ENCODE measurements at regions of chr6 and their contacts with region 1.

Region 1: GRCh38 chr6:2876210-2877056 is 26.7 kb downstream of the SERPINB9 start:
- DNase-seq: peak; percentile 58
- ATAC-seq: peak; percentile 15
- H3K4me3 ChIP-seq: peak overlapping the region; percentile 44 to 64 (median 58)
- H3K4me3 Mint-ChIP-seq: peak overlapping the region; percentile 91
- H3K27ac ChIP-seq: peak overlapping the region; percentile 91 to 94
- H3K27ac Mint-ChIP-seq: peak overlapping the region; percentile 97
- H3K4me1 ChIP-seq: peaks cover 73 to 75% of the 10 kb centered on the region in 2 donors
- H3K4me1 Mint-ChIP-seq: peaks cover 85% of the 10 kb centered on the region
- H3K27me3 ChIP-seq: no peaks in the 10 kb centered on the region
- H3K27me3 Mint-ChIP-seq: no peaks in the 10 kb centered on the region
- CTCF ChIP-seq: no peak

Region 2: GRCh38 chr6:1604158-1605030 is 1272.0 kb before region 1 on chr6:
- CTCF ChIA-PET with region 1: no interaction called
- POLR2A ChIA-PET with region 1: no interaction called
- intact Hi-C with region 1: no loop called
- DNase-seq: peak; percentile 84
- ATAC-seq: peak; percentile 81
- H3K4me3 ChIP-seq: peak overlapping the region in 4 of 5 experiments; percentile 10 to 59 (median 42)
- H3K4me3 Mint-ChIP-seq: peak overlapping the region; percentile 34
- H3K27ac ChIP-seq: no peak overlapping the region
- H3K27ac Mint-ChIP-seq: no peak overlapping the region
- H3K4me1 ChIP-seq: peaks cover 50 to 52% of the 10 kb centered on the region in 2 donors
- H3K4me1 Mint-ChIP-seq: peaks cover 34% of the 10 kb centered on the region
- H3K27me3 ChIP-seq: peaks cover 0 to 83% (median 66%) of the 10 kb centered on the region in 4 experiments
- H3K27me3 Mint-ChIP-seq: peaks cover 73% of the 10 kb centered on the region
- CTCF ChIP-seq: peak; percentile 99

Region 3: GRCh38 chr6:2853761-2854395 is 22.6 kb before region 1 on chr6:
- CTCF ChIA-PET with region 1: interaction called, 6 read pairs
- POLR2A ChIA-PET with region 1: interaction called, 10 read pairs
- intact Hi-C with region 1: no loop called
- DNase-seq: peak; percentile 85
- ATAC-seq: peak; percentile 39
- H3K4me3 ChIP-seq: peak overlapping the region in 3 of 5 experiments; percentile 31 to 52 (median 31)
- H3K4me3 Mint-ChIP-seq: peak overlapping the region; percentile 74
- H3K27ac ChIP-seq: peak overlapping the region; percentile 73 to 84
- H3K27ac Mint-ChIP-seq: peak overlapping the region; percentile 98
- H3K4me1 ChIP-seq: peaks cover 54 to 62% of the 10 kb centered on the region in 2 donors
- H3K4me1 Mint-ChIP-seq: peaks cover 68% of the 10 kb centered on the region
- H3K27me3 ChIP-seq: no peaks in the 10 kb centered on the region
- H3K27me3 Mint-ChIP-seq: no peaks in the 10 kb centered on the region
- CTCF ChIP-seq: peak; percentile 69

Region 4: GRCh38 chr6:2862712-2863181 is 13.7 kb before region 1 on chr6:
- CTCF ChIA-PET with region 1: interaction called, 5 read pairs
- POLR2A ChIA-PET with region 1: interaction called, 13 read pairs
- intact Hi-C with region 1: loop called (anchors 1 kb)
- DNase-seq: peak; percentile 84
- ATAC-seq: peak; percentile 48
- H3K4me3 ChIP-seq: peak overlapping the region in 1 of 5 experiments; percentile 2
- H3K4me3 Mint-ChIP-seq: peak overlapping the region; percentile 72
- H3K27ac ChIP-seq: peak overlapping the region; percentile 91 to 97
- H3K27ac Mint-ChIP-seq: peak overlapping the region; percentile 95
- H3K4me1 ChIP-seq: peaks cover 71 to 75% of the 10 kb centered on the region in 2 donors
- H3K4me1 Mint-ChIP-seq: peaks cover 81% of the 10 kb centered on the region
- H3K27me3 ChIP-seq: no peaks in the 10 kb centered on the region
- H3K27me3 Mint-ChIP-seq: no peaks in the 10 kb centered on the region
- CTCF ChIP-seq: no peak

Region 5: DNA sequence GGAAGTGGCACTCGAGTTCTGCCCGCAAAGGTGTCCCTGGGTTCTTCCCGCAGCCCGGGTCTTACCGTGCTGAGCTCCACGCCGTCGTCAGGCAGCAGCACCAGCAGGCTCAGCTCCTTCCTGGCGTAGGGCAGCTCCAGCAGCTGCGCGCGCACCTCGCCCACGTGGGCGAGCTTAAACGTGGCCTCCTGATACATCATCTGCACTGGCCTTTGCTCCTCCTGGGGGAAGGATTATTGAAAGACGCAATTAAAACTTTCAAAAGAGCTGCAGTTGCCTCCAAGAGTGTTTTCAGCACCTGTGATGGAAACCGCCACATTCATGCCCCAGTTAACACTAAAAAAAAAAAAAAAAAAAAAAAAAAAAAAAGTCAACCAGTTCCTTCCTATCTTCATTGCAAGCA is 15.3 kb after region 1 on chr6:
- CTCF ChIA-PET with region 1: interaction called, 8 read pairs
- POLR2A ChIA-PET with region 1: interaction called, 23 read pairs
- intact Hi-C with region 1: loop called (anchors 1 kb)
- DNase-seq: peak; percentile 87
- ATAC-seq: peak; percentile 90
- H3K4me3 ChIP-seq: peak overlapping the region in 4 of 5 experiments; percentile 5 to 34 (median 16)
- H3K4me3 Mint-ChIP-seq: peak overlapping the region; percentile 86
- H3K27ac ChIP-seq: peak overlapping the region; percentile 59 to 76
- H3K27ac Mint-ChIP-seq: peak overlapping the region; percentile 94
- H3K4me1 ChIP-seq: peaks cover 30 to 32% of the 10 kb centered on the region in 2 donors
- H3K4me1 Mint-ChIP-seq: peaks cover 59% of the 10 kb centered on the region
- H3K27me3 ChIP-seq: no peaks in the 10 kb centered on the region
- H3K27me3 Mint-ChIP-seq: no peaks in the 10 kb centered on the region
- CTCF ChIP-seq: no peak

Region 6: DNA sequence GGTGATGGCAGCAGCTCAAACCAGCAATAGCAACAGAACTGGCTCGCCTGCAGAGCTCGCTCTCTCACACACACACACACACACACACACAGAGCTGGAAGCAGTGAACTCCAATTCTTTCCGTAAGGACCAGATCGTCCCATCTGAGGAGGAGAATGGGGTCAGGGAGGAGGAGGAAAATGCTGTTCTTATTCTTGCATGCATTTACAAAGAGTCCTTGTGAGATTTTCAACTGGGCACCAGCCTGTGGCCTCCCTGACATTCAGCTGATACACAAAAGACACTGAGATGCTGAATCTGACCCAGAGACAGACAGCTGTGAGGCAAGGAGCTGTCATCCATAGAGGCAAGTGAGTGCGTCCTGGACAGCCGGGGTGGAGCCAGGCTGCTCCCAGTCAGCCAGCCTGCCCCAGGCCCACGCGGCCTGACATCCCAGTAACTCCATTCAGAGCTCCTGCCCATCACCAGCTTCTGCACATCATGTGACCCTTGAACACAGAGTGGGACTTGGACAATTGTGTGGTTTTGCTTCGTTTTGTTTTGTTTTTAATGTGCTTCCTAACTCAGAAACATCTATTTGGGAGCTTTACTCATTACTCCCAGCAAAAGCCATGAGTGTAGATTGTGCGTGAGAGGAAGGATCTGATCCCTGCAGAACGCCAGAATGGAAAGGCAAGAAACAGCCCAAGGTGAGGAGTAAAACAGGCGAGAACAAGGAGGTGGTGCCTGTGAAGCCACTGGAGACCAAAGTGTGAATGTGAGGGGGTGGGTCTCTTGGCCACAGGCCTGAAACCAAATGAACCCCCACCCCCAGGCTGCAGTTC is 24.6 kb after region 1 on chr6:
- CTCF ChIA-PET with region 1: interaction called, 33 read pairs
- POLR2A ChIA-PET with region 1: interaction called, 13 read pairs
- intact Hi-C with region 1: loop called (anchors 2 kb)
- DNase-seq: no peak
- ATAC-seq: no peak
- H3K4me3 ChIP-seq: peak overlapping the region in 4 of 5 experiments; percentile 10 to 95 (median 90)
- H3K4me3 Mint-ChIP-seq: peak overlapping the region; percentile 100
- H3K27ac ChIP-seq: peak overlapping the region; percentile 31 to 91
- H3K27ac Mint-ChIP-seq: peak overlapping the region; percentile 97
- H3K4me1 ChIP-seq: peaks cover 45 to 48% of the 10 kb centered on the region in 2 donors
- H3K4me1 Mint-ChIP-seq: peaks cover 56% of the 10 kb centered on the region
- H3K27me3 ChIP-seq: no peaks in the 10 kb centered on the region
- H3K27me3 Mint-ChIP-seq: no peaks in the 10 kb centered on the region
- CTCF ChIP-seq: no peak

Region 7: GRCh38 chr6:4125936-4126864 is 1249.8 kb after region 1 on chr6:
- CTCF ChIA-PET with region 1: no interaction called
- POLR2A ChIA-PET with region 1: no interaction called
- intact Hi-C with region 1: no loop called
- DNase-seq: no peak
- ATAC-seq: no peak
- H3K4me3 ChIP-seq: no peak overlapping the region
- H3K4me3 Mint-ChIP-seq: no peak overlapping the region
- H3K27ac ChIP-seq: no peak overlapping the region
- H3K27ac Mint-ChIP-seq: no peak overlapping the region
- H3K4me1 ChIP-seq: no peaks in the 10 kb centered on the region
- H3K4me1 Mint-ChIP-seq: peaks cover 2% of the 10 kb centered on the region
- H3K27me3 ChIP-seq: no peaks in the 10 kb centered on the region
- H3K27me3 Mint-ChIP-seq: no peaks in the 10 kb centered on the region
- CTCF ChIP-seq: no peak